GM12878 (cell line): ENCODE measurements at regions of chr16 and their contacts with region 1.

Region 1: DNA sequence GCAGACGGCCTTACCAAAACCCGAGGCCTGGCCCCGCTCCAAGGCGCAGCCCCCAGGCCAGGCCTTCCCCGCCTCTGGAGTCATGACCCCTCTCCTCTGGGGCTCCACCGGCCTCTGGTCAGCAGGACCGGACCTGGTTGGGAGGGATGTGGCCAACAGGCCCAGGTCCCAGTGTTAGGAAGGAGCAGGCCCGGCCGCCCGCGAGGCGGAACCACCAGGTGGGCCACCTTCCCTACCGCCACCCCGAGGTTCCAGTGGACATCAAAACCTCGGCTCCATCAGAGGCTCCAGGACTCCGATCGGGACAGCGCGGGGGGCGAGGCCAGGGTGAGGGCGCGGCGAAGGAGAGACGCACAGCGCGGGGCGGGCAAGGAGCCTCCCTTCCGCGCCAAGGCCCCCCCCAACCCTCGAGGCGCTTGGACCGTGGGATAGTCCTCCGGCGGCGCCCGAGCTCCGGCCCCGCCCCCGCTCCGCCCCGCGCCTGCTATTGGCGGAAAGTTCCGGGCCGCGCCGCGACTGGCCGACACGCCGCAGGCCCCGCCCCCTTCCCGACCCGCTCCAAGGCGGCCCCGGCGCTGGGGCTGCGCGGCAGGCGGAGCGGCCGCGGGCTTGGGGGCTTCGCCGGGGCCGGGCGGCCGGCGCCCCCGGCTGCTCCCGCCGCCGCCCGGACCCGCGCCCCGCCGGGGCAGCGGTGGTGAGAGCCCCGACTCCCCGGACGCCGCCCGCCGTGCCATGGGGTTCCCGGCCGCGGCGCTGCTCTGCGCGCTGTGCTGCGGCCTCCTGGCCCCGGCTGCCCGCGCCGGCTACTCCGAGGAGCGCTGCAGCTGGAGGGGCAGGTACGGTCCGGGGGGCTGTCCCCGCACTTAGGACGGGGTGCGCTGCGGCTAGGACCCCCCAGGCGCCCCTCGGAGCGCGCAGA is at the start of gene METRN:
- DNase-seq: no peak
- ATAC-seq: peak; percentile 88
- H3K4me3 ChIP-seq: peak within 1 kb of the TSS; percentile 58
- H3K27ac ChIP-seq: no peak within 1 kb of the TSS
- H3K4me1 ChIP-seq: peaks cover 7% of the 10 kb centered on the region
- H3K27me3 ChIP-seq: no peaks in the 10 kb centered on the region
- CTCF ChIP-seq: no peak
- EP300 ChIP-seq: no peak
- POLR2A ChIP-seq: peak; percentile 55; the same call in 1 of the 2 replicates
- RAD21 ChIP-seq: no peak
- polyA plus RNA-seq, gene METRN: 0.11 TPM in 1 of 2 experiments, not detected in the other

Region 2: DNA sequence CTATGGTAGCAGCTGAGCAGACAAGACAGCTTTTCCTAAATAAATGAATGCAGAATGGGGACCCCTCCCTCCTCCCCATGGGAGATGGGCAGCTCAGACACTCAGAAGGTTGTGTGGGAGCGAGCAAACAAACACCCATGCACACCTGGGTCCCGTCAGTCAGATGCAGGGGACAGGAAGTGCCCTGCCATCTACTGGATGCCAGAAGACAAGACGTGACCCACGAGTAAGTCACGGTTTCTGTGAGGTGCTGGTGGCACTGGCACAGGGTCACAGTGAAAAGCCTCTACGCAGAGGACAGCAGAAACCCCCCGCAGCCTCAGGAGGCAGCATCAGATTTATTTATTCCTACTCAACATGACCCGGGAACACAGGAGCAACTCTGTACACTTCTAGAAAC is 526.1 kb before region 1 on chr16:
- CTCF ChIA-PET with region 1: no interaction called
- POLR2A ChIA-PET with region 1: no interaction called
- RAD21 ChIA-PET with region 1: no interaction called
- SMC1A ChIA-PET with region 1: no interaction called
- in situ Hi-C with region 1: no loop called
- intact Hi-C with region 1: no loop called
- DNase-seq: no peak
- ATAC-seq: peak; percentile 69
- H3K4me3 ChIP-seq: no peak overlapping the region
- H3K27ac ChIP-seq: no peak overlapping the region
- H3K4me1 ChIP-seq: no peaks in the 10 kb centered on the region
- H3K27me3 ChIP-seq: no peaks in the 10 kb centered on the region
- CTCF ChIP-seq: peak; percentile 22 to 36 (median 30); a peak in 4 of 6 replicates
- EP300 ChIP-seq: no peak
- POLR2A ChIP-seq: peak; percentile 32; the same call in 1 of the 2 replicates
- RAD21 ChIP-seq: no peak

Region 3: DNA sequence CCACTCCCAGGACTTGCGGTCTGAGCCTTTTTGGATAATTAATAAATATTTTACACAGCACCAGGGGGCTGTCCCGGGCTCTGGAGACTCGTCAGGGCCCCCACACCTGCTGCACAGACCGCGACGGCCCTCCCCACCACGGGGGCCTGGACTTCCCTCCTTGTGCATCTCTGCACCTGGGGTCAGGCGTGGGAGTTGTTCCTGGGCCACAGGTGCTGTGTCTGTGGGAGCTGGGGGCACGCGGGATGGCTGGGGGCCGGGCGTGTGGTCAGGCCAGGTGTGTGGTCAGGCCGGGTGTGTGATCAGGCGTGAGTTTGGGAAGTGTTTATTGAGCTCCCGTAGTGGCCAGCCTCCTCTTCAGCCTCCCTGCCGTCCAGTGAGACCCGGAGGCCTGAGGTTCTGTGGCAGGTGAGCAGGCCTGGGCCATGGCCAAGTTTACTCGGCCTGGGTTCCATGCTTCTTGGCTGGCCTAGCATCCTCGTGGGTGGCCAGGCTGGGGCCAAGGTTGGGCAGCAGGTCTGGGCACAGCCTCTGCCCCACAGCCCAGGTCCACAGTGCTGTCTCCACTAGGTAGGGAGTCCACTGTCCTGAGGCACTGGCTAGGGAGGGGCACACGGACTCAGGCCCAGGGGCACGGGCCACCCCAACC is 36.5 kb before region 1 on chr16:
- CTCF ChIA-PET with region 1: no interaction called
- POLR2A ChIA-PET with region 1: no interaction called
- RAD21 ChIA-PET with region 1: no interaction called
- SMC1A ChIA-PET with region 1: no interaction called
- in situ Hi-C with region 1: no loop called
- intact Hi-C with region 1: no loop called
- DNase-seq: no peak
- ATAC-seq: no peak
- H3K4me3 ChIP-seq: no peak overlapping the region
- H3K27ac ChIP-seq: no peak overlapping the region
- H3K4me1 ChIP-seq: peaks cover 13% of the 10 kb centered on the region
- H3K27me3 ChIP-seq: no peaks in the 10 kb centered on the region
- CTCF ChIP-seq: no peak
- EP300 ChIP-seq: no peak
- POLR2A ChIP-seq: peak; percentile 47; the same call in 1 of the 2 replicates
- RAD21 ChIP-seq: no peak

Region 4: GRCh38 chr16:788394-789126 is 73.7 kb after region 1 on chr16 and contains the start of gene CHTF18:
- CTCF ChIA-PET with region 1: interaction called, 32 read pairs
- POLR2A ChIA-PET with region 1: interaction called, 12 read pairs
- RAD21 ChIA-PET with region 1: interaction called, 10 read pairs
- SMC1A ChIA-PET with region 1: interaction called, 12 read pairs
- in situ Hi-C with region 1: loop called (anchors 5 kb)
- intact Hi-C with region 1: loop called (anchors 1 kb)
- DNase-seq: peak; percentile 45
- ATAC-seq: peak; percentile 91
- H3K4me3 ChIP-seq: peak within 1 kb of the TSS; percentile 89
- H3K27ac ChIP-seq: peak within 1 kb of the TSS; percentile 69
- H3K4me1 ChIP-seq: peaks cover 9% of the 10 kb centered on the region
- H3K27me3 ChIP-seq: no peaks in the 10 kb centered on the region
- CTCF ChIP-seq: no peak
- EP300 ChIP-seq: no peak
- POLR2A ChIP-seq: peak; percentile 76
- RAD21 ChIP-seq: no peak
- polyA plus RNA-seq, gene CHTF18: 1.6 to 6.2 TPM

Region 5: GRCh38 chr16:804193-805048 is 89.6 kb after region 1 on chr16:
- CTCF ChIA-PET with region 1: no interaction called
- POLR2A ChIA-PET with region 1: no interaction called
- RAD21 ChIA-PET with region 1: no interaction called
- SMC1A ChIA-PET with region 1: no interaction called
- in situ Hi-C with region 1: no loop called
- intact Hi-C with region 1: no loop called
- DNase-seq: no peak
- ATAC-seq: no peak
- H3K4me3 ChIP-seq: no peak overlapping the region
- H3K27ac ChIP-seq: no peak overlapping the region
- H3K4me1 ChIP-seq: no peaks in the 10 kb centered on the region
- H3K27me3 ChIP-seq: peaks cover 0 to 2% of the 10 kb centered on the region in 2 experiments; a peak in 3 of 4 replicates
- CTCF ChIP-seq: no peak
- EP300 ChIP-seq: no peak
- POLR2A ChIP-seq: peak; percentile 13; the same call in 1 of the 2 replicates
- RAD21 ChIP-seq: no peak

Region 6: DNA sequence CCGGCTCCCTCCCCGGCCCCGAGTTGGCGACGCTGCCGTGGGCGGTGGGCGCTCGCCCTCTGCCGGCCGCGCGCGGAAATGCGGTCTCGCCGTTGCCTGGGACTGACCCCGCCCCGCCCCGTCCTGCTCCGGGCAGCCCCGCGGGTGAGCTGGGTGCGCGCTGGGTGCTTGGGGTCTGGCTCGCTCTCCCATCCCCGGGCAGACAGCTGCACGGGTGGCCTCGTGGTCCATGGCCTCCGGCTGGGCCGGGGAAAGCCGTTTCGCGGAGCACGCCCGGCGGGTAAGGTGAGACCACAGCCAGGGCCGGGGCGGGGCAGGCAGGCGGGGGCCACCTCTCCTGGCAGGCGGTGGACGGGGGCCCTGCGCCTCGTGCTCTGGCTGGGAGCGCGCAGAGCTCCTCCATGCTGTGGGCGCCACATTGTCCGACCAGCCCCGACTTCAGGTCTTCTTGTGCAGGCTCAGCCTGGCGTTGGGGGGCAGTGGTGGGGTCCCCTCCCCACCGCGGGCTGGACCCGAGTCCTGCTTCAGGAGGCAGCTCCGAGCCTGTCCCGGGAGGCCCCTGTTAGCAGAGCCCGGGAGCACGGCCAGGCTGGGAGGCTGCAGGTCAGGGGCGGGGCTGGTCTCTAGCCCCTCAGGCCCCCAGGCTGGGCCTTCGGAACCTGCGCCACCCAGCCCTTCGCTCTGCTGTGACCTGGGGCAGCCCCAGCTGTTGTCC is 388.3 kb after region 1 on chr16:
- CTCF ChIA-PET with region 1: interaction called, 6 read pairs
- POLR2A ChIA-PET with region 1: no interaction called
- RAD21 ChIA-PET with region 1: interaction called, 3 read pairs
- SMC1A ChIA-PET with region 1: interaction called, 3 read pairs
- in situ Hi-C with region 1: no loop called
- intact Hi-C with region 1: loop called (anchors 2 kb)
- DNase-seq: no peak
- ATAC-seq: peak; percentile 93
- H3K4me3 ChIP-seq: no peak overlapping the region
- H3K27ac ChIP-seq: no peak overlapping the region
- H3K4me1 ChIP-seq: no peaks in the 10 kb centered on the region
- H3K27me3 ChIP-seq: no peaks in the 10 kb centered on the region
- CTCF ChIP-seq: peak; percentile 47 to 68 (median 59); a peak in 5 of 6 replicates
- EP300 ChIP-seq: no peak
- POLR2A ChIP-seq: no peak
- RAD21 ChIP-seq: peak; percentile 65